ENCODE measurements at regions of chr15 and their contacts with region 1.

Region 1: GRCh38 chr15:99059010-99059981 is 45.6 kb upstream of the SYNM start:
- DNase-seq: peak; percentile 84 to 91 (median 86)
- ATAC-seq: peak; percentile 85 to 94 (median 88)
- H3K4me3 ChIP-seq: peak overlapping the region; percentile 44 to 73 (median 62)
- H3K27ac ChIP-seq: peak overlapping the region; percentile 39 to 94 (median 79)
- H3K4me1 ChIP-seq: peaks cover 0 to 39% (median 18%) of the 10 kb centered on the region in 12 donors
- H3K27me3 ChIP-seq: peaks cover 0 to 13% (median 0%) of the 10 kb centered on the region in 9 donors
- CTCF ChIP-seq: peak; percentile 50 to 89 (median 78)
- POLR2A ChIP-seq: peak in 1 of 2 donors; percentile 35

Region 2: DNA sequence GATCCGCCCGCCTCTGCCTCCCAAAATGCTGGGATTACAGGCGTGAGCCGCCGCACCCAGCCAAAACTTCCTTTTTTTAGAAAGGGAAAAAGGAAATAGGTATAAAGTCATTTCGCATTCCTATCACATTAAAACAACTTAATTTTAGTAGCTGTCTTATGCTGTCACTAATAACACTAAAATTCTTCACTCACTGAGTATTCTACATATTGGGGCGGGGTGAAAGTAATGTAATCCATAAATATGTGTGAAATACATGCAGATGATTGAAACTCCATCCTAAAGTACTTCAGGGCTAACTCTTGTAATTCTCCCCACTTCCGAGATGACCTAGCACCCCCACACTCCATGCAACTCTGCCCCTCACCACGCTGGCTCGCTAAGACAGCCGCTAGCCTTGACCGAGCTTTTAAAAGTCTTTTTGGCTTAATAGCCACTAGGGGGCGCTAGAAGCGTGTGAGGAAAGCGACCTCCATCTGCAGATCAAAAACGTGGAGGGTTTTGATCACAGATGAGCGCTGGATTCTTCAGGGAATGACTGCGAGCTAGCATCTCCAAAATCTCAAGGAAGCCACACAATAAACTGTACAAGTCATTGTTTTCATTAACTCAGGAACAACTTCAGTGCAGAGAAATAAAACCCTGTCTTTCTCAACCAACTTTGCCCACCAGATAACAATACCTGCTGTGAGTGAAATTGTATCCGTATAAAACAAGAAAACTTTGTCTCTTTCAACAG is 540.3 kb before region 1 on chr15:
- intact Hi-C with region 1: loop called in 2 of 10 experiments (anchors 5 kb)
- DNase-seq: peak in 3 of 5 donors; percentile 41 to 54 (median 50)
- ATAC-seq: peak in 3 of 4 donors; percentile 73 to 82 (median 82)
- H3K4me3 ChIP-seq: no peak overlapping the region
- H3K27ac ChIP-seq: no peak overlapping the region
- H3K4me1 ChIP-seq: peaks cover 0 to 8% (median under 1%) of the 10 kb centered on the region in 12 donors
- H3K27me3 ChIP-seq: peaks cover 0 to 8% (median 0%) of the 10 kb centered on the region in 9 donors
- CTCF ChIP-seq: peak; percentile 62 to 89 (median 82)
- POLR2A ChIP-seq: no peak

Region 3: GRCh38 chr15:98881526-98882520 is 177.5 kb before region 1 on chr15:
- intact Hi-C with region 1: loop called in 3 of 10 experiments (anchors 5 to 10 kb)
- DNase-seq: no peak
- ATAC-seq: peak in 2 of 4 donors; percentile 37 to 40
- H3K4me3 ChIP-seq: no peak overlapping the region
- H3K27ac ChIP-seq: no peak overlapping the region
- H3K4me1 ChIP-seq: peaks cover 0 to 82% (median 44%) of the 10 kb centered on the region in 12 donors
- H3K27me3 ChIP-seq: no peaks in the 10 kb centered on the region
- CTCF ChIP-seq: peak; percentile 47 to 71 (median 60)
- POLR2A ChIP-seq: no peak

Region 4: GRCh38 chr15:98943601-98944151 is 115.6 kb before region 1 on chr15:
- intact Hi-C with region 1: loop called in 5 of 10 experiments (anchors 5 to 10 kb)
- DNase-seq: peak in 4 of 5 donors; percentile 73 to 81 (median 78)
- ATAC-seq: peak; percentile 83 to 91 (median 86)
- H3K4me3 ChIP-seq: no peak overlapping the region
- H3K27ac ChIP-seq: peak overlapping the region in 11 of 12 donors; percentile 14 to 79 (median 72)
- H3K4me1 ChIP-seq: peaks cover 0 to 48% (median 19%) of the 10 kb centered on the region in 12 donors
- H3K27me3 ChIP-seq: no peaks in the 10 kb centered on the region
- CTCF ChIP-seq: peak in 1 of 12 donors; percentile 8
- POLR2A ChIP-seq: no peak

Region 5: GRCh38 chr15:98966091-98966787 is 93.1 kb before region 1 on chr15:
- intact Hi-C with region 1: loop called in 2 of 10 experiments (anchors 10 kb)
- DNase-seq: no peak
- ATAC-seq: no peak
- H3K4me3 ChIP-seq: no peak overlapping the region
- H3K27ac ChIP-seq: no peak overlapping the region
- H3K4me1 ChIP-seq: peaks cover 0 to 4% (median 0%) of the 10 kb centered on the region in 12 donors
- H3K27me3 ChIP-seq: no peaks in the 10 kb centered on the region
- CTCF ChIP-seq: no peak
- POLR2A ChIP-seq: no peak

Region 6: GRCh38 chr15:98996169-98996568 is 63.1 kb before region 1 on chr15:
- intact Hi-C with region 1: no loop called
- DNase-seq: no peak
- ATAC-seq: no peak
- H3K4me3 ChIP-seq: no peak overlapping the region
- H3K27ac ChIP-seq: no peak overlapping the region
- H3K4me1 ChIP-seq: no peaks in the 10 kb centered on the region
- H3K27me3 ChIP-seq: no peaks in the 10 kb centered on the region
- CTCF ChIP-seq: no peak
- POLR2A ChIP-seq: no peak

Region 7: DNA sequence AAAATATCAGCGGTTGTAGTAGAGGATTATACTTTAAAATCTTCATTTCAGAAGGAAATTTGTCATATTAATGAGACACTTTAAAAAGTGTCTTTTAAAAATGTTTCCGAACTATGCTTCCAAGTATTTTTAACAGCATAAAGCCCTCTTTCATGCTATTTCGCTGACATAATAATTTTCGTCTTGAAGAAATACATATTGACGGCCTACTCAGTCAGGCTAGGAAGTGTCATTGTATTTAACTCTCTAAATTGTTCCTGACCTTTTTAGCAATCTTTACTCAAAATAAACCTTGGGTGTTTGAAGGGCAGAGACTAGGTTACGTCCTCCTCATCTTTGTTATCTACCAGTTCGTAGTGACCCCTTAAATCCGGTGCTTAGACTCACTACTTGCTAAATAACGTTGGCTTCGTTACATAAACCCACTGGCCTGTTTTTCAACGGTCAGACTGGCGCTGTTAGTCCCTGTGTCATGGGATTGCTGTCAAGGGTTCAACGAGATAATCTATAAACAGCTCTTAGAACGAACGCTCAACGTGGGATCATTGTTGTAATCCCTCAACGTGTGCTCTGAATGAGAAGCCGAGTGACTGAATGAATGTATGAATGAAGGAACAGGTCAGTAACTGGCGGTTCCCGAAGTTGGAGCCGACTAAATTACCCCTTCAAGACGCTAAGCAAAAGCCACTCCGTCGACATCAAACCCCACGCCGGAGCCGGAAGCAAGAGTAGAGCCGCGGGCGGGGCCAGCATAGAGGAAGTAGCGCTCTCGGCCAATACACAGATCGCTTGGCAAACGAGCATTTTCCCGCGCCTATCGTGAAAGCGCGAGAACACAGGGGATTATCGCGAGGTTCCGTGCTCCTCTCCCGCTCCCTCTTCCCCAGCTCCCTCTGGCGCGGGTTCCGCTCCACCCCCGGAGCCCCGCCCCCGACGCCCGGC is 191.5 kb after region 1 on chr15:
- intact Hi-C with region 1: no loop called
- DNase-seq: peak; percentile 98 to 99 (median 99)
- ATAC-seq: peak; percentile 92 to 97 (median 96)
- H3K4me3 ChIP-seq: peak overlapping the region; percentile 42 to 87 (median 74)
- H3K27ac ChIP-seq: peak overlapping the region; percentile 87 to 97 (median 92)
- H3K4me1 ChIP-seq: peaks cover 0 to 48% (median 23%) of the 10 kb centered on the region in 12 donors
- H3K27me3 ChIP-seq: no peaks in the 10 kb centered on the region
- CTCF ChIP-seq: no peak
- POLR2A ChIP-seq: peak in 1 of 2 donors; percentile 67

Measured in heart left ventricle (tissue), 16 donors.